Astrocyte of the cerebellum (primary cell): ENCODE measurements at regions of chr20 and their contacts with region 1.

Region 1: GRCh38 chr20:31425797-31426196 is 14.6 kb upstream of the DEFB123 start:
- DNase-seq: no peak
- H3K4me3 ChIP-seq: no peak overlapping the region
- CTCF ChIP-seq: no peak

Region 2: DNA sequence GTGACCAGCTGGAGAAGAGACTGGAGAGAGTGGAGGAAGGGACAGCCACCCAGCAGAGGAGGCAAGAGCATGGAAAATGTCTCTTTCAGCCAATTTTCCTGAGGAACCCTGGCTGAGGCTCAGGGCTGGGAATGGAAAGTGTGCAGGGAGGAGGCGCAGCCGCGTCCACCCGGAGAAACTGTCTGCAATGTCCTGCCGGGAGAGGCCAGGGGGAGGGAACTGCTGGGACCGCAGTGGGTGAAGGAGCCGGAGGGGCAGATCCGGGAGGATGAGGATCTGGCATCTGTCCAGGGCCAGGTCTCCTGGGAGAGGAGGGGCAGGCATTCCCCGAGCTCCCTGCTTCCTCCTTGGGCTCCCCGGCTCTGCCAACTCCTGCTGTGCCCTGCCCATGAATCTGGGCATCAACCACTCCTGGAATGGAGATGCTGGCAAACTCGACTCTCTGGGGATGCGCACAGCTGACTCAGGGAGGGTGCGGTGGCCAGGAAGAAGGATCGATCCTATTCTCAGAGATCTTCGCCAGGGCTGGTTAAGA is 71.0 kb after region 1 on chr20:
- in situ Hi-C with region 1: loop called (anchors 5 kb)
- DNase-seq: no peak
- H3K4me3 ChIP-seq: no peak overlapping the region
- CTCF ChIP-seq: no peak